ENCODE measurements at regions of chr20 and their contacts with region 1.

Region 1: DNA sequence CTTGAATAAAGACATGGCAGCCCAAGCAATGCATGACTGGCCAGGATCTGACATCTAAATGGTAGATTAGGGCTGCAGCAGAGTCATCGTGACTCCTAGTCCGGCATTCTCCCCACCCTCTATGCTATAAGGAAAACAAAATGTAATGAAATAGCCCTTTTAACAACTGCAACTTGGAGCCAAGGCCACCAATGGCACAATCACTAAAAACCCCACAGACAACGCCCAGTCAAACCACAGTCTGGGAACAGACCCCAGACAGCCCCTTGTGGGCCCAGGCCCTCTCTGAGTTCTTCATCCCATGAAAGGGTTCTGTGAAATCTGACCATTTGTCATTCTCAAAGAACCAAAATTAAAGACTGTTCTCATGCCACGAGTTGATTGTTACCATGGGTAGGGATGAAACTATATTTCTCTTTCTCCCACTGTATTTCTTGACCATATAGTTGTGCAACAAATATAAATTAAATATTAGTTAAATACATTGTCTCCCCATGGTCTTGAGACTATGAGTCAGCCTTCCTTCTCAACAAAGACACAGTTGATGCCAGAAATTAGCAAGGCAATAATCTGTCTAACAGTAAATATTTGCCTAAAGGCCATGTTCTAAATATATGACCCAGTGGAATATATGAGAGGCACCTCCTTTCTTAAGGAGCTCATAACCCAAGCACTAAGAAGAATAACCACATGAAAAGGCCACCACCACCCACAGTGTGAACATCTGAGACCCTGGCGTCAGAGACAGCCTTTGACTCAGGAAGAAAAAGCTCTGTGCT is 85.6 kb upstream of the SSTR4 start:
- DNase-seq: no peak
- ATAC-seq: no peak
- H3K4me3 ChIP-seq: no peak overlapping the region
- H3K27ac ChIP-seq: no peak overlapping the region
- H3K4me1 ChIP-seq: no peaks in the 10 kb centered on the region
- H3K27me3 ChIP-seq: no peaks in the 10 kb centered on the region
- CTCF ChIP-seq: no peak

Region 2: GRCh38 chr20:23034721-23035671 is 85.5 kb after region 1 on chr20 and contains the start of gene SSTR4:
- intact Hi-C with region 1: loop called in 1 of 2 experiments (anchors 10 kb)
- DNase-seq: no peak
- ATAC-seq: peak in 1 of 4 donors; percentile 64
- H3K4me3 ChIP-seq: peak within 1 kb of the TSS; percentile 37
- H3K27ac ChIP-seq: no peak within 1 kb of the TSS
- H3K4me1 ChIP-seq: no peaks in the 10 kb centered on the region
- H3K27me3 ChIP-seq: peaks cover 0 to 37% (median 4%) of the 10 kb centered on the region in 3 donors
- CTCF ChIP-seq: no peak
- total RNA-seq, gene SSTR4: not detected